IMR-90 (cell line): ENCODE measurements at regions of chr4 and their contacts with region 1.

Region 1: GRCh38 chr4:154822775-154823174 is 41.7 kb downstream of the RBM46 start:
- DNase-seq: peak; percentile 84
- ATAC-seq: peak; percentile 88
- H3K4me3 ChIP-seq: no peak overlapping the region
- H3K27ac ChIP-seq: peak overlapping the region; percentile 59; the same call in 1 of the 2 replicates
- H3K4me1 ChIP-seq: no peaks in the 10 kb centered on the region
- H3K27me3 ChIP-seq: no peaks in the 10 kb centered on the region
- CTCF ChIP-seq: no peak
- POLR2A ChIP-seq: no peak
- RAD21 ChIP-seq: no peak

Region 2: GRCh38 chr4:155197757-155198156 is 375.0 kb after region 1 on chr4:
- CTCF ChIA-PET with region 1: no interaction called
- POLR2A ChIA-PET with region 1: no interaction called
- dilution Hi-C with region 1: no loop called
- in situ Hi-C with region 1: no loop called
- intact Hi-C with region 1: no loop called
- DNase-seq: no peak
- ATAC-seq: no peak
- H3K4me3 ChIP-seq: no peak overlapping the region
- H3K27ac ChIP-seq: no peak overlapping the region
- H3K4me1 ChIP-seq: no peaks in the 10 kb centered on the region
- H3K27me3 ChIP-seq: no peaks in the 10 kb centered on the region
- CTCF ChIP-seq: no peak
- POLR2A ChIP-seq: no peak
- RAD21 ChIP-seq: no peak

Region 3: DNA sequence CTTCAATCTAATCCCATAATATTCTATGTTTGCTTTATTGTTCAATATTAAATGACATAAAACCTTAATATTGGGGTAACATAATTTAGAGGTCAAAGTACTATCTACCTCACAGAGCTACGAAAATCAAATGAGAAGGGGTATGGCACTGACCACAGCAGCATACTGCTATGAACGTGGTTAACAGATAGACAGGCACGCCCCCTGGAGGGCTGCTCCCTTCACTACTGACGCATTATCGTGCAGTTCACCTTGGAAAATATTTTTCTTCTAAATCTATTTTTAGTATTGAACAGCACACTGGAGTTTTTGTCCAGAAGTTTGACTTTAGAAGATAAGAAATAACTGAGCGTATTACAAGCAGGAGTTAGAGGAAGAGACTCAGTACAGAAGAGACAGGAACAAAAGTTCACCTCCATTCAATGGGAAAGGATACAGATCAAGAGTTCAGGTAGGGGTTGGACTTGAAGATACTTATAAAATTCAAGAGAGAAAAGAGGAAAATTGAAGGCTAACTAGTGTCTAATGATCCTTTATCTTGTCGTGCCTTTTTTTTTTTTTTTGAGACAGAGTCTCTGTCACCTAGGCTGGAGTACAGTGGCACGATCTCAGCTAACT is 531.3 kb after region 1 on chr4:
- CTCF ChIA-PET with region 1: no interaction called
- POLR2A ChIA-PET with region 1: no interaction called
- dilution Hi-C with region 1: no loop called
- in situ Hi-C with region 1: no loop called
- intact Hi-C with region 1: loop called (anchors 5 kb)
- DNase-seq: peak; percentile 46
- ATAC-seq: peak; percentile 95
- H3K4me3 ChIP-seq: no peak overlapping the region
- H3K27ac ChIP-seq: no peak overlapping the region
- H3K4me1 ChIP-seq: no peaks in the 10 kb centered on the region
- H3K27me3 ChIP-seq: no peaks in the 10 kb centered on the region
- CTCF ChIP-seq: peak; percentile 68
- POLR2A ChIP-seq: no peak
- RAD21 ChIP-seq: peak; percentile 65

Region 4: GRCh38 chr4:155371432-155372043 is 548.8 kb after region 1 on chr4:
- CTCF ChIA-PET with region 1: no interaction called
- POLR2A ChIA-PET with region 1: no interaction called
- dilution Hi-C with region 1: no loop called
- in situ Hi-C with region 1: loop called (anchors 10 kb)
- intact Hi-C with region 1: no loop called
- DNase-seq: peak; percentile 21
- ATAC-seq: peak; percentile 45; the same call in 1 of the 2 replicates
- H3K4me3 ChIP-seq: no peak overlapping the region
- H3K27ac ChIP-seq: no peak overlapping the region
- H3K4me1 ChIP-seq: no peaks in the 10 kb centered on the region
- H3K27me3 ChIP-seq: no peaks in the 10 kb centered on the region
- CTCF ChIP-seq: peak; percentile 46
- POLR2A ChIP-seq: no peak
- RAD21 ChIP-seq: peak; percentile 42